ENCODE measurements at regions of chr10 and their contacts with region 1.

Region 1: DNA sequence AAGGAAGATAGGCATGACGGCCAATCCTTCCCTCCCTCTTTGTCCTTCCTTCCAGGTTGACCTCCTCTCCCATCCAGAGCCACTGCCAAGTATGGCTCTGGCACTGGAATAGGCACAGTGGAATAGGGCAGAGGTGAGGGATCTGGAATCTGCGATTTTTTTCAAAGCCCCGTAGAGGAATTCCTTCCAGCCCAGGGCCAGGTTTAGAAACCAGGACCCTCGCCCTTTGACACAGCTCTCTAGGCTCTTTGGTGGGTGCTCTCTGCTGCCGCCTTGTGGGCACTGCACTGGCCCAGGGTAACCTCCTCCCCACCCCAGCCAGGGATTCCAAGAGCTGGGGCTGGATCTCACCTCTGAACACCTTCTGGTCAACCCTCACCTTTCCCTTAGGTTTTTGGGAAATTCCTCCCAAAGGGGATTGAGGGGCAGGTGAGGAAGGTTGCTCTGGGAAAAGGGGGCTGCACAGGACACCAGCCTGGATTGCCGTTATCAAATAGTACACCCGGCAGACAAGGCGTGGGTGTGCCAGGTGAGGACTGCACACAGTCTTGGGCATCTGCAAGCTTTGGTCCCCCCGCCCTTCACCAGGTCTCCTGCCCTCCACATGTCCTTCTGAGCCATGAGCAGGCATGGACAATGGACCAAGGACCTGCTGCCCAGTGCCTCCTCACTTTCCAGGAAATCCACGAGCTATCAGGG is 22.8 kb downstream of the C10orf105 start:
- DNase-seq: no peak
- H3K4me3 ChIP-seq: no peak overlapping the region
- H3K27me3 ChIP-seq: 0 out of 2 replicates have a peak, but pooled peaks cover 4% of the 10 kb centered on the region
- CTCF ChIP-seq: peak; percentile 94

Region 2: GRCh38 chr10:71383972-71384687 is 312.6 kb before region 1 on chr10:
- CTCF ChIA-PET with region 1: interaction called, 13 read pairs
- POLR2A ChIA-PET with region 1: no interaction called
- DNase-seq: no peak
- H3K4me3 ChIP-seq: no peak overlapping the region
- H3K27me3 ChIP-seq: peaks cover 12% of the 10 kb centered on the region
- CTCF ChIP-seq: peak; percentile 97

Region 3: GRCh38 chr10:71454347-71454746 is 242.4 kb before region 1 on chr10:
- CTCF ChIA-PET with region 1: no interaction called
- POLR2A ChIA-PET with region 1: no interaction called
- DNase-seq: no peak
- H3K4me3 ChIP-seq: no peak overlapping the region
- H3K27me3 ChIP-seq: peaks cover 12% of the 10 kb centered on the region
- CTCF ChIP-seq: no peak

Region 4: DNA sequence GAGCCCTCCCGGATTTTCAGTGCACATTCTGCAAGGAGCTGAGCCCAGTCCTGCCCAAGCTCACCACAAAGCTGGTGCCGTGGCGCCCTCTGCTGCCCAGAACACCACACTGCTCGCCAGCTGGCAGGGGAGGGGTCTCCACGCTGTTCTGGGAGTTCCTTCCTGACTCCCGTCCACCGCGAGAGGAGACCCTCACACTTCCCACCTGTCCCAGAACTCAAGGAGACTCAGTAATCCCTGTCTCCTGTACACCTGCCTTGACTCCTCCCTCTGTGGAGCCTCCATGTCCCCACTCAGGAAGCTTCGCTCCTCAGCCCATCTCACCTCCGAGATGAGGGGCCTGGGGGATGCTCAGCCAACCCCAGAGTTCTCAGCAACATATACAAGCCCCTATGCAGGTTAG is 11.5 kb after region 1 on chr10:
- CTCF ChIA-PET with region 1: interaction called, 93 read pairs
- POLR2A ChIA-PET with region 1: no interaction called
- DNase-seq: no peak
- H3K4me3 ChIP-seq: no peak overlapping the region
- H3K27me3 ChIP-seq: peaks cover 2% of the 10 kb centered on the region; the same call in 1 of the 2 replicates
- CTCF ChIP-seq: peak; percentile 82

Region 5: GRCh38 chr10:71727738-71728737 is 31.3 kb after region 1 on chr10:
- CTCF ChIA-PET with region 1: interaction called, 11 read pairs
- POLR2A ChIA-PET with region 1: no interaction called
- DNase-seq: no peak
- H3K4me3 ChIP-seq: no peak overlapping the region
- H3K27me3 ChIP-seq: no peaks in the 10 kb centered on the region
- CTCF ChIP-seq: no peak

Region 6: GRCh38 chr10:71812016-71812912 is 115.5 kb after region 1 on chr10:
- CTCF ChIA-PET with region 1: interaction called, 23 read pairs
- POLR2A ChIA-PET with region 1: no interaction called
- DNase-seq: no peak
- H3K4me3 ChIP-seq: no peak overlapping the region
- H3K27me3 ChIP-seq: no peaks in the 10 kb centered on the region; the same call in 1 of the 2 replicates
- CTCF ChIP-seq: peak; percentile 94

Measured in BJ (cell line).